ENCODE measurements at regions of chr6 and their contacts with region 1.

Region 1: GRCh38 chr6:53718597-53719460 is 53.3 kb upstream of the KLHL31 start:
- DNase-seq: peak; percentile 34
- H3K4me3 Mint-ChIP-seq: no peak overlapping the region
- H3K27ac Mint-ChIP-seq: no peak overlapping the region
- H3K4me1 Mint-ChIP-seq: peaks cover 5% of the 10 kb centered on the region
- H3K27me3 Mint-ChIP-seq: peaks cover 13% of the 10 kb centered on the region

Region 2: DNA sequence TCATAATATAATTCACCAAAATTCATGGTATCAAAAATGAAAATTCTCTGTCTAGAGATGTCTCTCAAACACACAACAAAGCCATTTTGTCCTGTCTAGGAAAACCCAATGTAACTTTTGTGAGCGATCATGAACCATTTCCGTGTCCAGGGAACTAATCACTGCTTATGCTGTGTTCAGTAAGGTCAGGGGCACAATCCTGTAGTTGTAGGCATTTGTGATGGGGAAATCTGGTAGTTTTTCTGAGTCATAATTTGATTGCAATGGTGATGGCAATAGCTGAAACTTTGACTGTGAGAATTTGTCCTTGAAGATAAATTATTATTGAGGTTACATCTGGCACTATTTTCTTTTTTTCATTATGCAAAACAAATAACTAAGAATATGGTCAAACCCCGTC is 152.9 kb before region 1 on chr6:
- CTCF ChIA-PET with region 1: no interaction called
- POLR2A ChIA-PET with region 1: no interaction called
- intact Hi-C with region 1: no loop called
- DNase-seq: no peak
- H3K4me3 Mint-ChIP-seq: no peak overlapping the region
- H3K27ac Mint-ChIP-seq: no peak overlapping the region
- H3K4me1 Mint-ChIP-seq: no peaks in the 10 kb centered on the region
- H3K27me3 Mint-ChIP-seq: peaks cover 8% of the 10 kb centered on the region

Region 3: GRCh38 chr6:53651764-53652401 is 66.9 kb before region 1 on chr6:
- CTCF ChIA-PET with region 1: interaction called, 17 read pairs
- POLR2A ChIA-PET with region 1: no interaction called
- intact Hi-C with region 1: no loop called
- DNase-seq: peak; percentile 86
- H3K4me3 Mint-ChIP-seq: peak overlapping the region; percentile 85
- H3K27ac Mint-ChIP-seq: peak overlapping the region; percentile 80
- H3K4me1 Mint-ChIP-seq: peaks cover 31% of the 10 kb centered on the region
- H3K27me3 Mint-ChIP-seq: no peaks in the 10 kb centered on the region

Region 4: DNA sequence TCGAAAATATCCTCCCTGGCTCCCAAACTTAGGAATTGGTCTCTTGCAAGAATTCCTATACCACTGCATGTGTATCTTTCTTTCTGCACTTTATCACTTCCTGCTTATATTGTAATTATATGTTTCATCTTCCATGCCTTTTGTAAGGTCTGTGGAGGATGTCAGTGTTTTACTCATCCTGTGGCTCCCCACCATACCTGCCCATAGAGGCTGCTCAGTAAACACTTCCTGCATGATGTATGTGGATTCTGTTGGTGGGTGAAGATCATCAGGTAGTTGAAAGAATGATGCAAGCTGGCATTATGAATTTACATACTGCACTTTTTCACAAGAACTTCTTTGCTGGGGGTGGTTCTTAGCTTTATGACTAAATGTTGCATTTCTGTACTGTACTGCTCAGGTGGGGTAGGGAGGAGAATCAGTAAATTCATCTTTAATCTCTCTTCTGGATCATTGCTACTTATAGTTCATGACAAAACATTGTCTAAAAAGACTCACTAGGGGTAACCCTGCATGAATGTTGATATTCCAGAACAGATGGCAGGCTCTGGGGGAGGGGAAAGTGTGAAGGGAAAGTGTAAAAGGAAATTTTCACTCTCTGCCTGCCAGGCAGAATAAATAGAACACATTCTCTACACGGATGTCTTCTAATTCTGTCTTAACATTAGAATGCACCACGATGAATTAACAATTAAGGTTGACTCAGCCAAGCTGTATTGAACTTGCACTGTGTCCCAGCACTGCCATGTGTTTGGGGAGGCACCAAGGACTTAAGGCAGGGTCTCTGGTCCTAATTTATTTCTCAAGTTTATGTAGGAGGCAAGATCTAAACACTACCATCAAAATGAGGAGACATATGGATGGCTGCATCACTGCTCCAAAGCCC is 17.3 kb before region 1 on chr6:
- CTCF ChIA-PET with region 1: interaction called, 15 read pairs
- POLR2A ChIA-PET with region 1: no interaction called
- intact Hi-C with region 1: loop called (anchors 1 kb)
- DNase-seq: peak; percentile 44
- H3K4me3 Mint-ChIP-seq: no peak overlapping the region
- H3K27ac Mint-ChIP-seq: peak overlapping the region; percentile 9
- H3K4me1 Mint-ChIP-seq: peaks cover 10% of the 10 kb centered on the region
- H3K27me3 Mint-ChIP-seq: peaks cover 2% of the 10 kb centered on the region

Region 5: GRCh38 chr6:53707108-53707897 is 11.5 kb before region 1 on chr6:
- CTCF ChIA-PET with region 1: interaction called, 15 read pairs
- POLR2A ChIA-PET with region 1: no interaction called
- intact Hi-C with region 1: no loop called
- DNase-seq: no peak
- H3K4me3 Mint-ChIP-seq: no peak overlapping the region
- H3K27ac Mint-ChIP-seq: no peak overlapping the region
- H3K4me1 Mint-ChIP-seq: no peaks in the 10 kb centered on the region
- H3K27me3 Mint-ChIP-seq: peaks cover 16% of the 10 kb centered on the region

Region 6: DNA sequence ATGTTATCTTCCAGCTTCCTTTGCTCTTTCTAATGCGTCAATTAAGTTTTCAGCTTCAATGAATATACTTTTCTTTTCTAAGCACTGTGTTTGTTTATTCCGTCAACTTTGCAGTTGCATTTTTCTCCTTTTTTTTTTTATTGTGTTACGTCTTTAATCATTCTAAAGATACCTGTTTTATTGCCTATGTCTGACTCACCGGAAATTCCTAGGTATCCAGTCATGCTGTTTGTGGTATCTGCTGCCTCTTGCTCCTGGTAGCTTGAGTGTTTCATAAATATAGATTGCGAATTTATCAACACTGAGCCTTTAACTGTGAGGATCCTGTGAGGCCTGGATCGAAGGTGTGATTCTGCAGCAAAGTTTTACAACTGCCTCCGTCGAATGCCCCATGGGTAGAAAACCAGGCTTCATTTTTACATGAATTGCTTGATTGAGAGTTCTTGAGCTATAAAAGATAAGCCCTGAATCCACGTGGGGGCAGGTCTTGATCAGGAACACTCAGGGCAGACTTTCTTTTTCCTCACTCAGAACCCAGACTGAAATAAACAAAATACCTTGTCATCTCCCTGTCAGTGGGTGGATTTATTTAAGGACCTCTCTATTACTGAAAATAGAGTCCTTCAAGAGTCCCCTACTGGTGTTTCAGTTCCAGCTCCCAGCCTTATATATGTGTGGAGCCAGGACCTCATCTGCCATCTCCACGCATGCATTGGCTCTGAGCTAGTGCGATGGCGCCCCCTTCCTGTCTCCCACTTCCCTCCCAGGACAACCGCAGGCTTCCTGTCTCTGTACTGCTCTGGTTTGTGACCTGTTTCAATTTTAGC is 15.9 kb after region 1 on chr6:
- CTCF ChIA-PET with region 1: interaction called, 103 read pairs
- POLR2A ChIA-PET with region 1: no interaction called
- intact Hi-C with region 1: no loop called
- DNase-seq: peak; percentile 57
- H3K4me3 Mint-ChIP-seq: no peak overlapping the region
- H3K27ac Mint-ChIP-seq: no peak overlapping the region
- H3K4me1 Mint-ChIP-seq: peaks cover 24% of the 10 kb centered on the region
- H3K27me3 Mint-ChIP-seq: peaks cover 3% of the 10 kb centered on the region

Region 7: GRCh38 chr6:53956068-53956711 is 237.4 kb after region 1 on chr6:
- CTCF ChIA-PET with region 1: interaction called, 7 read pairs
- POLR2A ChIA-PET with region 1: no interaction called
- intact Hi-C with region 1: loop called (anchors 2 kb)
- DNase-seq: peak; percentile 46
- H3K4me3 Mint-ChIP-seq: no peak overlapping the region
- H3K27ac Mint-ChIP-seq: no peak overlapping the region
- H3K4me1 Mint-ChIP-seq: no peaks in the 10 kb centered on the region
- H3K27me3 Mint-ChIP-seq: peaks cover 2% of the 10 kb centered on the region

Measured in activated CD4-positive, alpha-beta memory T cell treated with anti-CD3 and anti-CD28 coated beads for 36 hours (primary cell).